Activated CD4-positive, alpha-beta memory T cell treated with anti-CD3 and anti-CD28 coated beads, Interleukin-2, amount 10 ng/mL, durations not matched to agents 7 days and 5 days (primary cell): ENCODE measurements at regions of chr11 and their contacts with region 1.

Region 1: DNA sequence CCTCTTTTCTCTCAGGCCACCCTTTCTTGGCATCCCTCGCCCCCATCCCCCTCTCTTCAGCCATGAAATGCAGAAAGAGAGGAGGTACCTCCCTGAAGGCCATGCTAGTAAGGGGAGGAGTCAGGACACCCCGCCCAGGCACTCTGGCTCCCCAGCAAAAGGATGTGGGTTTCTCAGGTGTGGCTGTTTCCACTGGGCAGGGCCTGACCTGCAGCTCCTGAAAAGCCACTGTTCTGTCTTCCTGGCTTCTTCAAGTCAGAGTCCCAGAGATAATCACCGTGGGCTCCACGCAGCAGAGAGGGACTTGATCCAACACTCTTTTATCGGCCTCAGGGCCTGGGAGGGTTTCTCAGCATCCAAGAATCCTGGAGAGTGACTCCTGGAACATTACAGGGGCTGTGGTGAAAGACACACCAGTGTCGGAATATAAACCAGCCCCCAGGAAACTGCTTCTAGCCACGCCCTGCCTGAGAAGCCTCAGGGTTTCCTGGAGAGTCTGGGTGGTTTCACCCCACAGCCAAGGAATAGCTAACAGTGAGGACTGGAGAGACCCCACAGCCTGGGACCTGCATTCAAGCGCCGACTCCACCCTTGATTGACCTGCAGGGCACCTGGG is 45.7 kb upstream of the TSPAN18 start:
- DNase-seq: peak; percentile 92
- H3K4me3 Mint-ChIP-seq: peak overlapping the region; percentile 68
- H3K27ac Mint-ChIP-seq: peak overlapping the region; percentile 92
- H3K4me1 Mint-ChIP-seq: peaks cover 56% of the 10 kb centered on the region
- H3K27me3 Mint-ChIP-seq: no peaks in the 10 kb centered on the region

Region 2: DNA sequence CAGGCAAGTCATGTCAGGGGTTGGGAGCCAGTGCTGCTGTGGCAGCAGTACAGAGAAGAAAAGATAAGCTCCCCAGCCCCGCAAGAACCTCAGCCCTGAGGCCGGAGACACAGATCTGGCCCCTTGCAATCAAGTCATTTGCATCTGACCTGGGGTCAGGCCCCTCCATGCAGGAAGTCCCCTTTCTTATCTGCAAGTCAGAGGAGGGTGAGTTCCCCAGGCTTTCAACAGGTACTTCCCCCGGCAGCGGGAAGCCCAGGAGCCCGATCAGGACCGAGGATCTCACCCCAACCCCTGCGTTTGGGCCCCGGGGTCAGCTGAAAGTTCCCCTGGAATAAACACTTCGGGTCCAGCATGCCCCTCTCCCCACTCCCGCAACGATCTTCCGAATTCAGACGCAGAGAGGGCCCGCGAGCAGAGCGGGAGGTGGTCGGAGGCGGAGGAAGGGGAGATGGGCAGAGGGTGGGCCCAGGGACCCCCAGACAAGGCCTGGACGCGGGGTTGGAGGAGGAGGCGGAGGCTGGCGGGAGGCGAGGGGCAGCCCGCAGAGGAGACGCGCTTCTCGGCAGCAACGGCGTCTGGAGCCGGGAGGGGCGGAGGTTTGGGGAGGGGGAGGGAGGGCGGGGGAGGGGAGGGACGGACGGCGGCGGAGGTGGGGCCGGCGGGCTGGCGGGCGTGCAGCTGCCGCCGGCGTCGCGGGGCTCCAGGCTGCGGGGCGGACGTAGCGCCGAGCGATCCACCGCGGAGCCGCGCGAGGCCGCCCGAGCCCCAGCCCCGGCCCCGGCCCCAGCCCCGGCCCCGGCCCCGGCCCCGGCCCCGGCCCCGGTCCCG is 45.4 kb after region 1 on chr11 and contains the start of gene TSPAN18:
- CTCF ChIA-PET with region 1: no interaction called
- POLR2A ChIA-PET with region 1: interaction called, 11 read pairs
- DNase-seq: peak; percentile 30
- H3K4me3 Mint-ChIP-seq: peak within 1 kb of the TSS; percentile 78
- H3K27ac Mint-ChIP-seq: peak within 1 kb of the TSS; percentile 38
- H3K4me1 Mint-ChIP-seq: peaks cover 50% of the 10 kb centered on the region
- H3K27me3 Mint-ChIP-seq: peaks cover 26% of the 10 kb centered on the region
- total RNA-seq, gene TSPAN18: 38.7 to 42.3 TPM

Region 3: DNA sequence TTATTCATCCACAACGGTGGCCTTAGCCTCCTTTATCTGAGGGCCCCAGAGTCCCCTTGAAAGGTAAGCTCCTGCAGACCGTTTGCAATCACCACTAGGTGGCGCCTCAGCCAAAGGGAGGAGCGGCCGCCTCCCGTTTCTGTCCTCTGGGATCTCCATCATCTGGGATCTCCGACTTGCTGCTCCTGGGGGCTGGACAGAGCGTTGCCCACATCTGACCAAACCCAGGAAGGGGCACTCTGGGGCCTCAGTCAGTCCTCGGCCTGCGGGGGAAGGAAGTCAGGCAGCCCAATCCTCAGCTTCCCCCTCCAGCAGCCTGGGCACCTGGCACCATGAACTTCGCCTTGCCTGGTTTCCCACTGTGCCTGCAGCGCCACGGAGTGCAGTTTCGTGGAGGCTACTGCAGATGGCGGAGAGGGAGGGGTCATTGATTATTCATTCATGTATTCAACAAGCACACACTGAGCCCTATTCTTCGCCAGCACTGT is 246.1 kb after region 1 on chr11:
- CTCF ChIA-PET with region 1: no interaction called
- POLR2A ChIA-PET with region 1: no interaction called
- DNase-seq: peak; percentile 58
- H3K4me3 Mint-ChIP-seq: no peak overlapping the region
- H3K27ac Mint-ChIP-seq: no peak overlapping the region
- H3K4me1 Mint-ChIP-seq: no peaks in the 10 kb centered on the region
- H3K27me3 Mint-ChIP-seq: no peaks in the 10 kb centered on the region